ENCODE measurements at regions of chr2 and their contacts with region 1.

Region 1: GRCh38 chr2:53202063-53202462 is 565.5 kb upstream of the CHAC2 start:
- DNase-seq: peak; percentile 59 to 96
- H3K4me3 ChIP-seq: 0 out of 2 replicates have a peak overlapping the region, but pooled peaks have one; percentile 12
- H3K27ac ChIP-seq: peak overlapping the region; percentile 42
- H3K4me1 ChIP-seq: peaks cover 13% of the 10 kb centered on the region
- H3K27me3 ChIP-seq: no peaks in the 10 kb centered on the region
- CTCF ChIP-seq: peak; percentile 68

Region 2: GRCh38 chr2:51981783-51982182 is 1220.3 kb before region 1 on chr2:
- CTCF ChIA-PET with region 1: no interaction called
- POLR2A ChIA-PET with region 1: no interaction called
- intact Hi-C with region 1: no loop called
- DNase-seq: no peak
- H3K4me3 ChIP-seq: no peak overlapping the region
- H3K27ac ChIP-seq: no peak overlapping the region
- H3K4me1 ChIP-seq: no peaks in the 10 kb centered on the region
- H3K27me3 ChIP-seq: no peaks in the 10 kb centered on the region
- CTCF ChIP-seq: no peak

Region 3: GRCh38 chr2:52500561-52500960 is 701.5 kb before region 1 on chr2:
- CTCF ChIA-PET with region 1: no interaction called
- POLR2A ChIA-PET with region 1: no interaction called
- intact Hi-C with region 1: no loop called
- DNase-seq: no peak
- H3K4me3 ChIP-seq: no peak overlapping the region
- H3K27ac ChIP-seq: no peak overlapping the region
- H3K4me1 ChIP-seq: no peaks in the 10 kb centered on the region
- H3K27me3 ChIP-seq: no peaks in the 10 kb centered on the region
- CTCF ChIP-seq: no peak

Region 4: GRCh38 chr2:52810460-52810859 is 391.6 kb before region 1 on chr2:
- CTCF ChIA-PET with region 1: interaction called, 8 read pairs
- POLR2A ChIA-PET with region 1: no interaction called
- intact Hi-C with region 1: loop called (anchors 1 kb)
- DNase-seq: peak in 1 of 2 experiments; percentile 5
- H3K4me3 ChIP-seq: no peak overlapping the region
- H3K27ac ChIP-seq: no peak overlapping the region
- H3K4me1 ChIP-seq: no peaks in the 10 kb centered on the region
- H3K27me3 ChIP-seq: no peaks in the 10 kb centered on the region
- CTCF ChIP-seq: peak; percentile 65; the same call in 1 of the 2 replicates

Region 5: DNA sequence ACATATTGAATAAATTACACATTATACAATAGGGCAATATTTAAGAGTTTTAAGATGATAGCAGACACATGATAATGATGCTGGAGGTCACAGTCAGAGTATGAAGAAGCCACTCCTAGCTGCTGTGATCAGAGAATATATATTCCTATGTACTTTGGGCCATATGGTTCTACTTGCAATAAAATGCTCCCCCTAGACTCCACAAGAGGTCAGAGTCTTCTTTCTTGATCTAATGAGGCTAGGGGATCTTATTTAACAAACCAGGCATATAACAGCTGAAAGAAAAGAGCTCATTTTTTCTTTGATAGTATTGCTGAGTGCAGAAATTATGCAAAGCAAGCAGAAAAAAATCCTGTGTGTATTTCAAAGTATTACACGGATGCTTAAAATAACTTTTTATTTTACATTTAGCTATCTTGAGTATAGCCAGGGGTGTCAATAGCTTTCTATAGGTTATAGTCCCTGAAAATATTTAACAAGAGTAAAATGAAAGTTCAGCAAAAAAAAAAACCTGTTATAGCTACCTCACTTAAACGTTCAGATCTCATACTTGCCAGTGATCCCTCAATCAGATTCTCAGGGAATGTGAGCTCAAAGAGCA is 183.1 kb before region 1 on chr2:
- CTCF ChIA-PET with region 1: no interaction called
- POLR2A ChIA-PET with region 1: no interaction called
- intact Hi-C with region 1: loop called (anchors 2 kb)
- DNase-seq: no peak
- H3K4me3 ChIP-seq: no peak overlapping the region
- H3K27ac ChIP-seq: no peak overlapping the region
- H3K4me1 ChIP-seq: no peaks in the 10 kb centered on the region
- H3K27me3 ChIP-seq: no peaks in the 10 kb centered on the region
- CTCF ChIP-seq: peak; percentile 41

Region 6: GRCh38 chr2:53268086-53268485 is 66.0 kb after region 1 on chr2:
- CTCF ChIA-PET with region 1: no interaction called
- POLR2A ChIA-PET with region 1: no interaction called
- intact Hi-C with region 1: no loop called
- DNase-seq: peak in 1 of 2 experiments; percentile 10
- H3K4me3 ChIP-seq: no peak overlapping the region
- H3K27ac ChIP-seq: no peak overlapping the region
- H3K4me1 ChIP-seq: peaks cover 3% of the 10 kb centered on the region
- H3K27me3 ChIP-seq: no peaks in the 10 kb centered on the region
- CTCF ChIP-seq: peak; percentile 30; the same call in 1 of the 2 replicates

Region 7: GRCh38 chr2:53445386-53446072 is 243.5 kb after region 1 on chr2:
- CTCF ChIA-PET with region 1: no interaction called
- POLR2A ChIA-PET with region 1: no interaction called
- intact Hi-C with region 1: loop called (anchors 10 kb)
- DNase-seq: peak in 1 of 2 experiments; percentile 55
- H3K4me3 ChIP-seq: peak overlapping the region; percentile 15; the same call in 1 of the 2 replicates
- H3K27ac ChIP-seq: peak overlapping the region; percentile 17
- H3K4me1 ChIP-seq: peaks cover 17% of the 10 kb centered on the region; the same call in 1 of the 2 replicates
- H3K27me3 ChIP-seq: no peaks in the 10 kb centered on the region
- CTCF ChIP-seq: no peak

Region 8: DNA sequence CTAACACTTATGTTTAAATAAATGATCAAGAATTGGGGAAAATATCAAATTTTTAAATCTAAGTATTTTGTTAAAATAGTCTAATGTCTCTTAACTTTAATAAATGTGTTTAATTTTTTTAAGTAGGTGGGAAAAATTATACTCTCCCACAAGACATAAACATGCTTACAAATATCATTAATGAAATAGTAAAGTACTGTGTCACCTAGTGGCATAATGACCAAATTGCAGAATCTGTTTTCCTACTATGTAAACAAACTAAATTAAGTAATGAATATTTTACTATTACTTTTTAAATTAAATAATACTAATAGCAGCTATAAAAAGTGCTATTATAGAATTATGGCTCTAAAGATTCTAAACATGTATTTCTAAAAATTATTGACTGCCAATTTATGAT is 513.5 kb after region 1 on chr2:
- CTCF ChIA-PET with region 1: no interaction called
- POLR2A ChIA-PET with region 1: no interaction called
- intact Hi-C with region 1: loop called (anchors 10 kb)
- DNase-seq: no peak
- H3K4me3 ChIP-seq: no peak overlapping the region
- H3K27ac ChIP-seq: no peak overlapping the region
- H3K4me1 ChIP-seq: no peaks in the 10 kb centered on the region
- H3K27me3 ChIP-seq: no peaks in the 10 kb centered on the region
- CTCF ChIP-seq: peak; percentile 78

Measured in PC-9 (cell line).